Activated T-helper 1 cell treated with anti-CD3 and anti-CD28 coated beads, Interleukin-12 subunit alpha, Interleukin-12 subunit beta, Interleukin-2, Interleukin-4 antibody, amounts not matched to agents 30 ng/mL and 10 ng/mL and 1 ng/mL, durations not matched to agents 14 hours and 24 hours and 36 hours (primary cell): ENCODE measurements at regions of chr22 and their contacts with region 1.

Region 1: DNA sequence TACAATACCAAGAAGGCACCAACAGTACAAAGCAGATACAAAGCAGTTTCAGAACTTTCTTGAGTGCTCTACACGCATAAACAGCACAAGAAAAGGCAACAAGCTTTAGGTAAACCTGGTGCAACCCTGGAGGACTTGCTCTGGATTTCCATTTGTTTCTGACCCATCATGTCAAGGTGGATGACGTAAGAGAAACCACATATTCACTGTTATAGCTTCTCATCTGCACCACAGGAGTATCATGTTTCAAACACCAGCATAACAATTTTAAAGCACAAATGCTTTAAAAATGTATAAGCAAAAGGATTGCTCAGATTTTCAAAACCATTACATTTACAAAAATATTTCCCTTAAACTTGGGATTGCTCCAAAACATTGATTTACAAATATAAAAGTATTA is 25.0 kb upstream of the YPEL1 start:
- DNase-seq: no peak
- H3K4me3 Mint-ChIP-seq: no peak overlapping the region
- H3K27ac Mint-ChIP-seq: peak overlapping the region; percentile 25
- H3K4me1 Mint-ChIP-seq: peaks cover 57% of the 10 kb centered on the region
- H3K27me3 Mint-ChIP-seq: no peaks in the 10 kb centered on the region

Region 2: GRCh38 chr22:21712894-21713712 is 47.5 kb before region 1 on chr22:
- intact Hi-C with region 1: loop called (anchors 1 kb)
- DNase-seq: peak; percentile 36
- H3K4me3 Mint-ChIP-seq: no peak overlapping the region
- H3K27ac Mint-ChIP-seq: no peak overlapping the region
- H3K4me1 Mint-ChIP-seq: peaks cover 7% of the 10 kb centered on the region
- H3K27me3 Mint-ChIP-seq: peaks cover 9% of the 10 kb centered on the region

Region 3: GRCh38 chr22:21791635-21792625 is 31.3 kb after region 1 on chr22:
- intact Hi-C with region 1: loop called (anchors 1 kb)
- DNase-seq: peak; percentile 12
- H3K4me3 Mint-ChIP-seq: no peak overlapping the region
- H3K27ac Mint-ChIP-seq: peak overlapping the region; percentile 72
- H3K4me1 Mint-ChIP-seq: peaks cover 12% of the 10 kb centered on the region
- H3K27me3 Mint-ChIP-seq: no peaks in the 10 kb centered on the region

Region 4: DNA sequence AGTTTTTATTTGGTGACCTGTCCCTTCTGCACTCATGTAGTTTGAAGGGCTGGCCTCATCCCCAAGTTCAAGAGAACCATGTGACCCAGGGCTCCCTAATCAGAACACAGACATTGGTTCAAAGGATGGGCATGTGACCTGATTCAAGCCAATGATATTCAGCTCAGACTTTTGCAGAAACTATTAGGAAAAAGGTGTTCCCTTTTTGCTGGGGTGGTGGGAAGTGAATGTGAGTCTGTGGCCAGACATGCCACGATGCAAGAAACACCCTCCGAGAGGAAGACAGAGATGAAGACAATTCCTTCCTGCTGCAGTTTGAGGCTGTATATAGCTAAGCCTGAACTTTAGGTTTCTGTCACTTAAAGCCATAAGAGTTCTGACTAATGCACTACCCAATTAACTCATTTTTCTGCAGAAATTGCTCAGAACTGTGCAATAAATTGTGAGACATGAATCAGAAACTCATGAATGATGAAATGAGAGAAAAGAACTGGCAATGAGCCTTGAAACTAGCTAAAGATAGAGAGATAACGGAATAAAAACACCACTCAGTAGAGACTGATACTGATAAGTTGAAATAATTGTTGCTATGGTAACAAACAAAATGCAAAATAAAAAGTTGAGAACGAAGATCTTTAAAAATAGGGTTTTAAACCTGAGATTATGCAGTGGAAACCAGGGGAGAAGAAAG is 116.0 kb after region 1 on chr22:
- intact Hi-C with region 1: loop called (anchors 1 kb)
- DNase-seq: no peak
- H3K4me3 Mint-ChIP-seq: no peak overlapping the region
- H3K27ac Mint-ChIP-seq: peak overlapping the region; percentile 94
- H3K4me1 Mint-ChIP-seq: peaks cover 15% of the 10 kb centered on the region
- H3K27me3 Mint-ChIP-seq: peaks cover 18% of the 10 kb centered on the region

Region 5: DNA sequence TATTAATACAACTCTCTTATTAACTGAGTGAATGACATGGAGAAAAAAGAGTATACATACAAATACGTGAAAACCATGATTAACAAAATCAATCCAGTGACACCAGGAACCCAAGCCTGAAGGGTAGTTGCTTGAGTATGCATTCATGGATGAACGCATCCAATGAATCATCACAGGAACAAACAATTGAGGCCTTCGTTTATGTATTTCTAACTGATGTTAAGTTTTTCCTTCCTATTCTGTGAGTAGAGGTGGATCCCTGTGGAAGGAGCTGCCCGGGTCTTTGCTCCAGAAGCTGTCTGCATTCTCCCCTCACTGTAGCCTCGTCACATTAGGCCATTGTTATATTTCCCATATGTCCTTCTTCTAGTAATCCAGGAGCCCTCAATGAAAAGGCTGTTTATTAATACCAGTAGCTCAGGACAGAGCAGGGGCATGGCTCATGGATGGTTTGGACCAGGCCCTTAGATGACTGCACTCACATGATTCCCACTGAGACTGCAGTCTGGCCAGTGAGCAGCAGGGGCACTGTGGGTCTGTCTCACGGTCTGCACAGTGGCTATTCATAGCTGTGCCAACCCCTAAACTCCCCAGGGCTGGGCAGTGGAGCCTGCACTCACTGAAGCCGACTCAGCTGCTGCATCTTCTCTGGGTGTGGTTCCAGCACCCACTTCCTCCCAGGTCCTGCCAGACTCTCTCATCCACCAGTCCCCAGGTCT is 350.1 kb after region 1 on chr22:
- intact Hi-C with region 1: loop called (anchors 1 kb)
- DNase-seq: peak; percentile 60
- H3K4me3 Mint-ChIP-seq: peak overlapping the region; percentile 43
- H3K27ac Mint-ChIP-seq: peak overlapping the region; percentile 79
- H3K4me1 Mint-ChIP-seq: peaks cover 27% of the 10 kb centered on the region
- H3K27me3 Mint-ChIP-seq: peaks cover 7% of the 10 kb centered on the region